GM13976 (cell line): ENCODE measurements at regions of chr12 and their contacts with region 1.

Region 1: GRCh38 chr12:49232940-49233841 is 31.7 kb upstream of the TUBA1C start:
- DNase-seq: no peak
- CTCF ChIP-seq: no peak

Region 2: DNA sequence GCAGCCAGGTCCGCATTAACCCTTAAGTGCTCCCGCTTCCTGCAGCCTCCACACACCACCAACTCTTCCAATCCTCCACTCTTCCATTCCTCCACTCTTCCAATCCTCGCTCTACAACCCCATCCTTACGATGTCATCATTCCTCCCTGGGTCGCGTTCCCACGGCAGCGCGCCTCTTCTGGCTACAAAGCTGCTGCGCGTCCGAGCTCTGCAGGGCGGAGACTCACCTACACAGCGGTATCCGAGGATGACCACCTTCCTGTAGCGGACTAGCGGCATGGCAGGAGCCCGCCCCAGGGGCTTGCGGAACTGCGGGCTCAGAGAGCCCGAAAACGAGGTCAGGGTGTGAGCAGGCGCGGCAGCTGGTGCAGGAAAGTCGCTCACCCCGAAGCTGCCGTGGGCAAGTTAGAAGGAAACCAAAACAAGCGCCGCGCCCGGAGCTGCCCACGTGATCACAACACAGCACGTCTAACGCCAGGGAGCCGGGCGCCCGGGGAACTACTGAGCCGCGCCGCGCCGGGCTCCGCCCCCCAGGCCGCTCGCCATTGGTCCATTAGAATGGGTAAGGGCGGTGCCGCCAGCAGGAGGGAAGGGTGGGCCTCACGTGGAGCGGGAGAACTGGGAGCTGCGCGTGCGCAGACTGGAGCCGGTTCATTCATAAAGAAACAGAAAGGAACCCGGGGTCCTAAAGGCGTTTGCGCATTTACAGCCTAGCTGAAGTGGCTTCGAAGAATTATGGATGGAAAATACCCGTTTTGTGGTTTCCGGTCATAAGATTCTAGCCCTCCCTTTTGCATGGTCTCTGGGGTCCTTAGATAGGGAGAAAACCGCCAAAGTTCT is 163.5 kb before region 1 on chr12 and contains the start of gene RHEBL1:
- in situ Hi-C with region 1: loop called (anchors 10 kb)
- DNase-seq: peak; percentile 98
- CTCF ChIP-seq: peak; percentile 41